Activated naive CD4-positive, alpha-beta T cell treated with anti-CD3 and anti-CD28 coated beads for 36 hours (primary cell): ENCODE measurements at regions of chr2 and their contacts with region 1.

Region 1: DNA sequence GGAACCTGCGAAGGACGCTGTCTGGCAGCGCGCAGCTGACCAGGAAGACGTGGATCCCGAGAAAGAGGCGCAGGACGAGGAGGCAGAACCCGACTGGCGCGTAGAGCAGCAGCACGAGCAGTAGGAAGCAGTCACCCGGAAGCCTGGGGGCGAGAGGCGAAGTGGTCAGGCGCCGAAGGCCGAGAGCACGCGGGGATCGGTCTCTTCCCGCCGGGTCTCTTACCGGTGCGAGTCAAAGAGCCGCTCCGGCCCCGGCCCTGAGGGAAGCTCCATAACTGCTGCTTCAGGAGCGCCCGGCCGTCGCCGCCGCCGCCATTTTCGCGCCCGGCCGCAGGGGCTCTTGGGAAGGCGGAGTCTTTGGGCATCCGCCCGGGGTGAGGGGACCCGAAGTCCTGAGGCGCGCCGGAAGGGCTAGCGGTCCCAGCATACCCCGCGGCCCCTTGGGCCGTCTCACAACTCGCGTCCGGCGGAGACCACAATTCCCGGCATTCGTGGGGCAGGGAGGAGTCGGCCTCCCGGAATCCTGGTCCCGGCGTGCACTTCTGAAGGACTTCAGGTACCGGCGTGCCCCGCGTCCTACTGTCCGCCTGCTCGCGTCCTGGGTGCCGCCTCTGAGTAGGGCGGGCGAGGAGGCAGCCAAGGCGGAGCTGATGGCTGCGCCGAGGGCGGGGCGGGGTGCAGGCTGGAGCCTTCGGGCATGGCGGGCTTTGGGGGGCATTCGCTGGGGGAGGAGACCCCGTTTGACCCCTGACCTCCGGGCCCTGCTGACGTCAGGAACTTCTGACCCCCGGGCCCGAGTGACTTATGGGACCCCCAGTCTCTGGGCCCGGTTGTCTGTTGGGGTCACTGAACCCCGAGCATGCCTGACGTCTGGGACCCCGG is at the starts of genes AUP1 and HTRA2:
- DNase-seq: peak; percentile 96
- H3K4me3 Mint-ChIP-seq: peak within 1 kb of the TSS; percentile 98
- H3K27ac Mint-ChIP-seq: peak within 1 kb of the TSS; percentile 91
- H3K4me1 Mint-ChIP-seq: peaks cover 40% of the 10 kb centered on the region
- H3K27me3 Mint-ChIP-seq: no peaks in the 10 kb centered on the region
- total RNA-seq, gene AUP1: 77.4 to 78.5 TPM
- total RNA-seq, gene HTRA2: 39.0 to 39.7 TPM

Region 2: DNA sequence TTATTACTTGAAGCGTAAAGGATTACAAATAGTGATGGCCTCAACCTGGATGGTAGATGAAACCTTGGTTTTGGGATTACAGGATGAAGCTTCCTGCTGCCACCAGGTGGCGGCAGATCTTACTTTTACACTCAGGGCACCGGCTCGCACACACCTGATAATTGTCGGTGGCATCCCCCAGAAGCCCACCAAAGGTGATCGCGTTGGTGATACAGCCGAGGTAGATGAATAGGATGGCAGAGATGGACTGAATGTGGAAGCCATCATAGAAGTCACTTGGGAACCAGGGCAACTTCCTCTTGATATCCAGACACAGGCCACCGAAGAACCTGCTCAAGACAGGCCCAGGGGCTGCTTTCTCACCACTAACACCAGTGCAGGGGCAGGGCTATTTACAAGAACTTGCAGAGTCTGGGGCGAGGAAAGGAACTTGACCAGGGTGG is 279.4 kb before region 1 on chr2:
- CTCF ChIA-PET with region 1: no interaction called
- intact Hi-C with region 1: loop called (anchors 1 kb)
- DNase-seq: peak; percentile 68
- H3K4me3 Mint-ChIP-seq: no peak overlapping the region
- H3K27ac Mint-ChIP-seq: no peak overlapping the region
- H3K4me1 Mint-ChIP-seq: peaks cover 2% of the 10 kb centered on the region
- H3K27me3 Mint-ChIP-seq: no peaks in the 10 kb centered on the region

Region 3: GRCh38 chr2:74391580-74392448 is 137.8 kb before region 1 on chr2:
- CTCF ChIA-PET with region 1: no interaction called
- intact Hi-C with region 1: loop called (anchors 1 kb)
- DNase-seq: peak; percentile 98
- H3K4me3 Mint-ChIP-seq: peak overlapping the region; percentile 92
- H3K27ac Mint-ChIP-seq: peak overlapping the region; percentile 96
- H3K4me1 Mint-ChIP-seq: peaks cover 4% of the 10 kb centered on the region
- H3K27me3 Mint-ChIP-seq: no peaks in the 10 kb centered on the region

Region 4: GRCh38 chr2:74482801-74483674 is 46.6 kb before region 1 on chr2 and contains the starts of genes CCDC142 and TTC31:
- CTCF ChIA-PET with region 1: interaction called, 39 read pairs
- intact Hi-C with region 1: loop called (anchors 1 kb)
- DNase-seq: peak; percentile 97
- H3K4me3 Mint-ChIP-seq: peak within 1 kb of the TSS; percentile 93
- H3K27ac Mint-ChIP-seq: peak within 1 kb of the TSS; percentile 98
- H3K4me1 Mint-ChIP-seq: peaks cover 32% of the 10 kb centered on the region
- H3K27me3 Mint-ChIP-seq: no peaks in the 10 kb centered on the region
- total RNA-seq, gene CCDC142: 3.7 to 5.8 TPM
- total RNA-seq, gene TTC31: 29.5 to 30.6 TPM

Region 5: DNA sequence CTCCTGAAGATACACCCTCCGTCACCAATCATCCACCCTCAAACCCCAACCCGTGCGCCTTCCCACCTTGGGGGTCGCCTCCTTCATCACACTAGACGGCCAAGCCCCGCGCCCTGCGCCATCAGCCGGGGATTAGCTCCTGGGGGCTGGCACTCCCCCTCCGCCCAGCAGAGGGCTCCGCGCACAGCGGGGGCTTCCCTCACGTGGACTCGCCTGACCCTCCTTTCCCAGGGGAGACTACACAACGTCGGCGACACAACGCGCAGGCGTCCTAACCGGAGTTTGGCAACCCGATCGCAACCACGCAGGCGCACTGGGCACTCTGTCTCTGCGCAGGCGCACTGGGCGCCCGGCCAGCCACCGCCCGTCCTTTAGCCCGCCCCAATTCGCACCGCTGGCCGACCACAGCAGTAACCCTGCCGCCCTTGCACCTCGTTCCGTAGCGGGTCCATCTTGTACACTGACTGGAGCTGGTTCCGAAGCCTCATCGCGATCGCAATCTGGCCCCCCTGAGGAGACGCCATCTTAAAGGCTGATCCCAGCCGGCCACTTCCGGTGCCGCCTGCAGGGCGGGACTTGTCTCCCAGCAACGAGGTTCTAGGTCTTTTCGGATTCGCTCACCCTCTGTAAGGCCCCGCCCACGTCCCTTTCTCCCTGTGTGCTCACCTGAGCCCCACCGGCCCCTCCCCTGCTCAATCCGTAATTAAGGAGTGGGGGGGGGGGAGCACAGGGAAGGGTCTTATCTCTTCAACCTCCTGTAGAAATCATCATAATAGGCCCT is 22.3 kb before region 1 on chr2 and contains the start of gene PCGF1:
- CTCF ChIA-PET with region 1: interaction called, 6 read pairs
- intact Hi-C with region 1: loop called (anchors 1 kb)
- DNase-seq: peak; percentile 99
- H3K4me3 Mint-ChIP-seq: peak within 1 kb of the TSS; percentile 91
- H3K27ac Mint-ChIP-seq: peak within 1 kb of the TSS; percentile 98
- H3K4me1 Mint-ChIP-seq: peaks cover 40% of the 10 kb centered on the region
- H3K27me3 Mint-ChIP-seq: peaks cover 41% of the 10 kb centered on the region
- total RNA-seq, gene PCGF1: 21.1 to 24.4 TPM

Region 6: GRCh38 chr2:74553892-74554645 is 24.5 kb after region 1 on chr2 and contains the start of gene LOXL3:
- CTCF ChIA-PET with region 1: interaction called, 3 read pairs
- intact Hi-C with region 1: loop called (anchors 1 kb)
- DNase-seq: peak; percentile 82
- H3K4me3 Mint-ChIP-seq: peak within 1 kb of the TSS; percentile 94
- H3K27ac Mint-ChIP-seq: peak within 1 kb of the TSS; percentile 88
- H3K4me1 Mint-ChIP-seq: peaks cover 4% of the 10 kb centered on the region
- H3K27me3 Mint-ChIP-seq: peaks cover 17% of the 10 kb centered on the region
- total RNA-seq, gene LOXL3: 0.35 to 0.41 TPM

Region 7: GRCh38 chr2:74653985-74654882 is 124.6 kb after region 1 on chr2 and contains the start of gene SEMA4F:
- CTCF ChIA-PET with region 1: no interaction called
- intact Hi-C with region 1: no loop called
- DNase-seq: peak; percentile 97
- H3K4me3 Mint-ChIP-seq: peak within 1 kb of the TSS; percentile 72
- H3K27ac Mint-ChIP-seq: peak within 1 kb of the TSS; percentile 33
- H3K4me1 Mint-ChIP-seq: peaks cover 11% of the 10 kb centered on the region
- H3K27me3 Mint-ChIP-seq: peaks cover under 1% of the 10 kb centered on the region
- total RNA-seq, gene SEMA4F: 4.3 to 5.3 TPM